K562 (cell line): ENCODE measurements at regions of chr1 and their contacts with region 1.

Region 1: GRCh38 chr1:202122639-202123335 is at the start of gene GPR37L1:
- DNase-seq: peak; percentile 62 to 72 (median 66)
- ATAC-seq: peak; percentile 80
- H3K4me3 ChIP-seq: no peak within 1 kb of the TSS
- H3K27ac ChIP-seq: no peak within 1 kb of the TSS
- H3K4me1 ChIP-seq: peaks cover 9 to 17% of the 10 kb centered on the region in 2 experiments; a peak in 4 of 5 replicates
- H3K27me3 ChIP-seq: peaks cover 38 to 67% of the 10 kb centered on the region in 2 experiments
- CTCF ChIP-seq: peak; percentile 67 to 76 (median 70)
- EP300 ChIP-seq: no peak
- POLR2A ChIP-seq: no peak
- RAD21 ChIP-seq: peak; percentile 21 to 63; a peak in 3 of 4 replicates
- polyA plus RNA-seq, gene GPR37L1: not detected

Region 2: GRCh38 chr1:201792534-201793305 is 330.1 kb before region 1 on chr1:
- CTCF ChIA-PET with region 1: no interaction called
- POLR2A ChIA-PET with region 1: no interaction called
- in situ Hi-C with region 1: no loop called
- intact Hi-C with region 1: no loop called
- DNase-seq: peak; percentile 80 to 86 (median 84)
- ATAC-seq: peak; percentile 98
- H3K4me3 ChIP-seq: no peak overlapping the region
- H3K27ac ChIP-seq: no peak overlapping the region
- H3K4me1 ChIP-seq: no peaks in the 10 kb centered on the region
- H3K27me3 ChIP-seq: no peaks in the 10 kb centered on the region; a peak in 1 of 5 replicates
- CTCF ChIP-seq: peak; percentile 95 to 99 (median 98)
- EP300 ChIP-seq: no peak
- POLR2A ChIP-seq: no peak
- RAD21 ChIP-seq: peak; percentile 97 to 99

Region 3: DNA sequence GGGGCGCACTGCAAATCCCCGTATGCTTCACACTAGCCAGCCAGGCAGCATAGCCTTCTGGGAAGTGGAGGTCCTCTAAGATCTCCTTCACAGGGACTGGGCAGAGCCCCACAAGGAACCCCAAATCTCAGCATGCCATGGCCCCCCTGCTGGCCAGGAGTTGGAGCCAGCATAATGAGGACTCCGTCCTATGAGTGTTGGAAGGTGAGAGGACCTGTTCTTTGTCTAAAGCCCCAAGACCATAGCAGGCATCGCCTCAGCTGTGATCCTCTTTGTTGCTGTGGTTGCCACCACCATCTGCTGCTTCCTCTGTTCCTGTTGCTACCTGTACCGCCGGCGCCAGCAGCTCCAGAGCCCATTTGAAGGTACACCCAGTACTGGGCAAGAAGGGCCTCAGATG is 232.6 kb before region 1 on chr1:
- CTCF ChIA-PET with region 1: interaction called, 26 read pairs
- POLR2A ChIA-PET with region 1: interaction called, 7 read pairs
- in situ Hi-C with region 1: loop called (anchors 5 kb)
- intact Hi-C with region 1: no loop called
- DNase-seq: peak in 1 of 4 experiments; percentile 36
- ATAC-seq: no peak
- H3K4me3 ChIP-seq: no peak overlapping the region
- H3K27ac ChIP-seq: no peak overlapping the region
- H3K4me1 ChIP-seq: peaks cover 23 to 34% of the 10 kb centered on the region in 2 experiments
- H3K27me3 ChIP-seq: 0 out of 5 replicates have a peak, but pooled peaks cover 0 to 4% of the 10 kb centered on the region in 2 experiments
- CTCF ChIP-seq: 0 out of 6 replicates have a peak, but pooled peaks of 1 of the 3 experiments have one; percentile 22
- EP300 ChIP-seq: no peak
- POLR2A ChIP-seq: no peak
- RAD21 ChIP-seq: no peak

Region 4: DNA sequence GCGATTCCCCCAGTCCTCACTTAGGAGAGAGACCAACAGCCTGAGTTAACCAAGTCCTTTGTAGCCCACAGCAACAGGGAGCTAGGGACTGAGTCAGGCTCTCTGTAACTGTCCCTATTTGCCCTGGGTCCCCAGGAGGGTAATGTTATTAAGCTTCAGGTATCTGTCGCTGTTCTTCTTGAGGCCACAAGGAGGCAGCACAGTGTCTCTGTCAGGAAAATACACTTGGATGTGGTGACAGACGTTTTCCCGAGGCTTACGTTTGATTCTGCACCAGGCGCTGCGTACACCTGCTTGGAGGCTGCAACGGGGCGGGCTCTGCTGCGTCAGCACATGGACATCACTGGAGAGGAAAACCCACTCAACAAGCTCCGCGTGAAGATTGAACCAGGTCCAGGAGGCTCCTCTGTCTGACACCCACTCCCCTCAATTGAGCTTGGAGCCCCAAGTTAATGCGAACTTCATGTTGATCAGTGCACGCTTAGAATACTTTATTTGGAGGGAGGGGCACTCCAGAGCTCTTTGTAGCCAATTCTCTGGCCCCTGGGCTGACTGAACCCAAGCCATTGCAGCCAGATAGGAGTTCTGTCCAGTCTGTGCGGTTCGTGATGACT is 123.1 kb before region 1 on chr1:
- CTCF ChIA-PET with region 1: interaction called, 52 read pairs
- POLR2A ChIA-PET with region 1: interaction called, 10 read pairs
- in situ Hi-C with region 1: loop called (anchors 5 kb)
- intact Hi-C with region 1: loop called (anchors 1 kb)
- DNase-seq: peak; percentile 76 to 81 (median 78)
- ATAC-seq: peak; percentile 93
- H3K4me3 ChIP-seq: no peak overlapping the region
- H3K27ac ChIP-seq: no peak overlapping the region
- H3K4me1 ChIP-seq: no peaks in the 10 kb centered on the region; a peak in 1 of 5 replicates
- H3K27me3 ChIP-seq: no peaks in the 10 kb centered on the region
- CTCF ChIP-seq: peak; percentile 91 to 93 (median 93)
- EP300 ChIP-seq: no peak
- POLR2A ChIP-seq: no peak
- RAD21 ChIP-seq: peak; percentile 73 to 86

Region 5: DNA sequence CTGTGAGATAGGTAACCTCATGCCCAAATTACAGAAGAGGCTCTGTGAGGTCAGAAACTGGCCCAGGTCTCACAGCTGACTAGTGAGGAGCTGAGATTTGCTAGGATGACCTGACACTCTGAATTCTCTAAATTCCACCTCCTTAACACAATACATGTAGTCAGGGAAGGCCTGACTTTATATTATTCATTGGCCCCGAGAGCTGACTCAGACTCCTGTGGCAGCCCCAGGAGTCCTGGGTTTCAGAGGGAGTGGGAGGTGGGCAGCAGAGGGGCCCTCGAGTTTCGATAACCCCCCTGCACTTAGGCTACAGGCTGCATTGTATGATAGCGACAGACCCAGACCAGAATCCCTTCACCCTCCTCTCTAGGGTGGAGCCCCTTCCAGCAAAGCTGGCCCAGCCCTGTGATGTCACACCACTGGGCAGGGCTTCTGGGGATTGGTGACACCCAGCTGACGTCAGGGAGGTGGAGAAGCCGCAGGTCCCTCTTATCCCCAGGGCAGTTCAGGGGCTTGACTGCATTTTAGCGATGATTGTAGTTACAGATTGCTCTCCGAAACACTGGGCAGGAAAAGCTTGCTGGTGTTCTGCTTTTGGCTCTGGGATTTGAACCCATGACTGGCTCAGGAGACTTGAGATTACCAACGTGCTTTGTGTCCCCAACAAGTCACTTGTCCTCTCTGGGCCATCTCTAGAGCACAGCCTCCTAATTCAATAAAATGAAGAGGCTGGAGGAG is 17.1 kb before region 1 on chr1:
- CTCF ChIA-PET with region 1: no interaction called
- POLR2A ChIA-PET with region 1: interaction called, 10 read pairs
- in situ Hi-C with region 1: no loop called
- intact Hi-C with region 1: no loop called
- DNase-seq: peak; percentile 89 to 97 (median 94)
- ATAC-seq: peak; percentile 96
- H3K4me3 ChIP-seq: peak overlapping the region; percentile 3; the same call in 1 of the 2 replicates
- H3K27ac ChIP-seq: peak overlapping the region; percentile 60
- H3K4me1 ChIP-seq: peaks cover 28 to 36% of the 10 kb centered on the region in 2 experiments
- H3K27me3 ChIP-seq: no peaks in the 10 kb centered on the region
- CTCF ChIP-seq: no peak
- EP300 ChIP-seq: no peak; the same call in 1 of the 2 replicates
- POLR2A ChIP-seq: no peak
- RAD21 ChIP-seq: no peak

Region 6: DNA sequence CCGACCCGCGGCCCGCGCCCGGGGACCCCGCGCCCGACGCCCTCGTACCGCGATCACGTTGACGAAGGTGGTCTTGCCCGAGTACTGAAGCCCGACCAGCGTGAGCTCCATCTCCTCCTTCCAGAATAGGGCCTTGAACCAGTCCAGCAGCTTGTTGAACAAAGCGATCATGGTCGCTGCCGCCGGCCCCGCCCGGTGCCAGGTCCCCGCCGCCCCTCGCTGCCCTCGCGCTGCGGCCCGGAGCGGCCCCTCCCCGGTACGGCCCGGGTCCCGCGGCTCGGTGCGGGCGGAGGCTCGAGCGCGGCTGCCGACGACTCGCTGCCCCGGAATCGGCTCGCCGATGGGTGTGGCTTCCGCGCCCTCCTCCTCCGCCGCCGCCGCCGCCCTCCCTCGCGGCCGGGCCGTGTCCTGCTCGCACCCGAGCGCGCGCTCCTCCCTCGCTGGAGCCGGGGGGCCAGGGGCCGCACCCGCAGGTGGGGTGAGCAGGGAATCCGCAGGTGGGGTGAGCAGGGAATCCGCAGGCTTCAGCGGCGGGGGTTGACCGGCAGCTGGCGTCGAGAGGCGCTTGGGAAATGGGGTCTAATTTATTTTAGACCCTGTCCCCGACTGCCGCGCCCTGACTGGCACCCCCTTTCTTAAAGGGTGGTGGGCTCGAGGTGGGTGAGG is 21.7 kb after region 1 on chr1 and contains the start of gene ARL8A:
- CTCF ChIA-PET with region 1: no interaction called
- POLR2A ChIA-PET with region 1: no interaction called
- in situ Hi-C with region 1: no loop called
- intact Hi-C with region 1: no loop called
- DNase-seq: peak; percentile 81 to 92 (median 91)
- ATAC-seq: peak; percentile 86
- H3K4me3 ChIP-seq: peak within 1 kb of the TSS; percentile 80
- H3K27ac ChIP-seq: peak within 1 kb of the TSS; percentile 73
- H3K4me1 ChIP-seq: peaks cover 19 to 31% of the 10 kb centered on the region in 2 experiments; a peak in 4 of 5 replicates
- H3K27me3 ChIP-seq: no peaks in the 10 kb centered on the region
- CTCF ChIP-seq: no peak
- EP300 ChIP-seq: no peak
- POLR2A ChIP-seq: peak; percentile 54
- RAD21 ChIP-seq: no peak; a peak in 1 of 4 replicates
- polyA plus RNA-seq, gene ARL8A: 0.17 to 0.32 TPM